PC-3 (cell line): ENCODE measurements at regions of chr1 and their contacts with region 1.

Region 1: GRCh38 chr1:235253219-235253962 is 74.6 kb downstream of the ARID4B start:
- DNase-seq: peak; percentile 77
- ATAC-seq: peak; percentile 88
- H3K4me3 ChIP-seq: no peak overlapping the region
- H3K27ac ChIP-seq: no peak overlapping the region
- H3K4me1 ChIP-seq: no peaks in the 10 kb centered on the region
- H3K27me3 ChIP-seq: no peaks in the 10 kb centered on the region
- CTCF ChIP-seq: peak; percentile 78

Region 2: GRCh38 chr1:235317168-235317567 is 63.8 kb after region 1 on chr1:
- CTCF ChIA-PET with region 1: no interaction called
- POLR2A ChIA-PET with region 1: no interaction called
- intact Hi-C with region 1: loop called (anchors 5 kb)
- DNase-seq: no peak
- ATAC-seq: no peak
- H3K4me3 ChIP-seq: no peak overlapping the region
- H3K27ac ChIP-seq: no peak overlapping the region
- H3K4me1 ChIP-seq: no peaks in the 10 kb centered on the region
- H3K27me3 ChIP-seq: no peaks in the 10 kb centered on the region
- CTCF ChIP-seq: no peak